Thyroid gland (tissue), 4 donors: ENCODE measurements at regions of chr1 and their contacts with region 1.

Region 1: DNA sequence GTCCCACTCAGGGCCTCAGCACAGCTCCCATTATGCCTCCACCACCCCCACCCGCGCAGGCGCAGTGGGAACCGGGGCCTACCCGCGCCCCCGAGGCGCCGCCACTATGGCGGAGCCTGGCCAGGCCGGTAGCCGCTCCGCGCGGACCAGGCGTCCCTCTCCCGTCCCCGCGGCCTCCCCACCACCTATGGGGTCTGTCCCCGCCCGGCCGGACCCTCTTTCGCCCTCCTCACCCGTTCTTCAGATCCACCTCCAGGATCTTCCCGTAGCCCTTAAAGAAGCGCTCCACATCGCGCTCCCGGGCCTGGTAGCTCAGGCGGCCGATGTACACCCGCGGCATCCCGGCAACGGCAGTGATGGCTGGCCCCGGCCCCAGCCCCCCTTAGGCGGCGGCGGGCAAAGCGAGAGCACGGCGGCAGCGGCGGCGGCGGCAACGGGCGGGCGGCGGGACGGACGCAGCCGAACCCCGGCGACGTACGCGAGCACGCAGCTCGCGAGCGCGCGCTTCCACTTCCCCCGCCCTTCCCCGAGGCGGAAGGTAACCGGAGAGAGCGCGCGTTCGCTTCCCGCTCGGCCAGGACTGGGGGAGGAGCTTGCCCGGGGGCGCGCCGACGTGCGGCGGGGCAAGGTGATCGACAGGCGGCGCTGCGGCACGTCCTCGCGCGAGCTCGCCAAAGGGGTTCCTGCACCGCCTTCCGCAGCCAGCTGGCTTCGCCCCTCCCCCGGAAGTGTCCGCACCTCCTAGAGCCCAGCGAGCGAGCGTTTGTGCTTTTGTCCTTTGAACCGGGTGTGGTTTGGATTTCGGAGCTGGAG is at the start of gene SRSF4:
- DNase-seq: peak; percentile 99
- H3K4me3 ChIP-seq: peak within 1 kb of the TSS; percentile 43 to 100 (median 96)
- H3K27ac ChIP-seq: peak within 1 kb of the TSS; percentile 99 to 100 (median 99)
- H3K4me1 ChIP-seq: peaks cover 27 to 38% of the 10 kb centered on the region in 2 donors
- H3K27me3 ChIP-seq: no peaks in the 10 kb centered on the region
- CTCF ChIP-seq: peak; percentile 17 to 86 (median 60)
- POLR2A ChIP-seq: peak; percentile 68 to 95
- total RNA-seq, gene SRSF4: 67.1 to 94.7 (median 85.2) TPM

Region 2: DNA sequence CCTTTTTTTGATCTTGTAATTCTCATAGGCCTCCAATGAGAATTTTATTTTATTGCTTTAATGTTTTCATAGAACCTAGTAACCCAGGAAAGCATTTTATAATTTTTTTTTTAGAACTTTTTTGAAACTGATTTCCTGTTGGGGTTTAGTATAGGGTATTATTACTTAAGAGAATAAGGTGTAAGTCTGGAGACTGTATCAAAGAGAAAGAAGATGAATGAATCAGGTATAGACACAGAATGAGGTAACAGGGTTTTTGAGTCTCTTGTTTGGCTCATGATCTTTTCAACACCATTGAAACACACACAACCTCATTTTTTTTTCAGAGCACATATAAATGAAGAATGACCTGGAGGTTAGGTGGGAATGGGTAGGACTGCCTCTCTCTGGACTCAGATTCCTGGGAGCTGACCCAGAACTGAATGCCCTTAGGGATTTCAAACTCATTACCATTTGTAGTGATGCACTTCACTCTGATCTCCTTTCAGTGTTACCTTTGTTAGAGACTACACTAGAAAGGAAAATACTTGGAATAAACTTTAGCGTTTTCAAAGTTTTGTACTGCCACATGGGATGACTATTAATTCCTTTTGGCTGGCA is 216.2 kb before region 1 on chr1:
- intact Hi-C with region 1: no loop called
- DNase-seq: no peak
- H3K4me3 ChIP-seq: no peak overlapping the region
- H3K27ac ChIP-seq: no peak overlapping the region
- H3K4me1 ChIP-seq: no peaks in the 10 kb centered on the region
- H3K27me3 ChIP-seq: no peaks in the 10 kb centered on the region
- CTCF ChIP-seq: no peak
- POLR2A ChIP-seq: no peak

Region 3: DNA sequence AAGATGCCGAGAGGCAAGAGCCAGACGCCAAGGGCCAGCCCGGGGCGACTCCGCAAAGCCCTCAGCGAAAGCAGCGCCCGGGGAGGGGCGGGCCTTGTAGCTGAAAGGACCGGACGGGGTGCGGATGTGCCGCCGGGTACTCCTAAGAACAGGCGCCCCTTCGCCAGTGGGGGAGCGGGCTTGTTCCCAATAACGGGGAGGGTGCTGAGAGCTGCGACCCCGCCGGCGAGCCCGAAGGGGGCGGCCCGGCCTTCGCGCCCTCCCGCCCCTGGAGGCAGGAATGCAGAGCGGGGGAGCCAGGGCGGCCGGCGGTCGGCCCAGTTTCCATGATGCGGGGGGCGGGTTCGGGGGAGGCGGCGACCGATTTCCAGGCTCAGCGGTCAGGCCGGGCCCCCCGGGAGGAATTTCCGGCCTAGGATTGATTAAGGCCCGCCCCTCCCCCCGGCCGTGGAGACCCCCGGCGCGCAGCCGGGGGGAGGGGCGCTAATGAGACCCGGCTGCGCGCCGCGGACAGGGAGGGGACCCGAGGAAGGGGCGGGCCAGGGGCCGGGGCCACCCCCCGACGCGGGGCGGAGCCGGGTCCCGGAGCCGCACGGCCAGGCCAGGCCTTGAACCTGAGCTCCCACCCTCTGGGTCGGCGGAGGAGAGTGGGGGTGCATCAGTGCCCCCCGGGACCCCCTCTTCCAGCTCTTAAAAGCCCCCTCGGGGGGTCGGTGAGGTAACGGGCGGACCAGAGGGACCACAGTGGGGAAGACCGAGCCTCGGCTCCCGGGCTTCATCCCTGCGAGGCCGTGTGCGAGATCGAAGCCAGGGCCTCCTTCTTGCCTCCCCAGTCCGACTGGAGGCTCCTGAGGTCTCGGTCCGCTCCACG is 57.0 kb before region 1 on chr1:
- intact Hi-C with region 1: loop called (anchors 5 kb)
- DNase-seq: peak; percentile 52 to 58
- H3K4me3 ChIP-seq: peak overlapping the region; percentile 0 to 69 (median 50)
- H3K27ac ChIP-seq: peak overlapping the region; percentile 71 to 84 (median 81)
- H3K4me1 ChIP-seq: peaks cover 26 to 33% of the 10 kb centered on the region in 2 donors
- H3K27me3 ChIP-seq: peaks cover 7% of the 10 kb centered on the region
- CTCF ChIP-seq: peak; percentile 24 to 80 (median 46)
- POLR2A ChIP-seq: peak in 1 of 2 donors; percentile 32